Cardiac septum (tissue), 1 donor: ENCODE measurements at regions of chr3 and their contacts with region 1.

Region 1: GRCh38 chr3:159818399-159818798 is 170.2 kb upstream of the IL12A start:
- DNase-seq: no peak

Region 2: GRCh38 chr3:159266779-159267178 is 551.6 kb before region 1 on chr3:
- intact Hi-C with region 1: loop called (anchors 5 kb)
- DNase-seq: no peak

Region 3: GRCh38 chr3:159323848-159324247 is 494.6 kb before region 1 on chr3:
- intact Hi-C with region 1: no loop called
- DNase-seq: no peak

Region 4: DNA sequence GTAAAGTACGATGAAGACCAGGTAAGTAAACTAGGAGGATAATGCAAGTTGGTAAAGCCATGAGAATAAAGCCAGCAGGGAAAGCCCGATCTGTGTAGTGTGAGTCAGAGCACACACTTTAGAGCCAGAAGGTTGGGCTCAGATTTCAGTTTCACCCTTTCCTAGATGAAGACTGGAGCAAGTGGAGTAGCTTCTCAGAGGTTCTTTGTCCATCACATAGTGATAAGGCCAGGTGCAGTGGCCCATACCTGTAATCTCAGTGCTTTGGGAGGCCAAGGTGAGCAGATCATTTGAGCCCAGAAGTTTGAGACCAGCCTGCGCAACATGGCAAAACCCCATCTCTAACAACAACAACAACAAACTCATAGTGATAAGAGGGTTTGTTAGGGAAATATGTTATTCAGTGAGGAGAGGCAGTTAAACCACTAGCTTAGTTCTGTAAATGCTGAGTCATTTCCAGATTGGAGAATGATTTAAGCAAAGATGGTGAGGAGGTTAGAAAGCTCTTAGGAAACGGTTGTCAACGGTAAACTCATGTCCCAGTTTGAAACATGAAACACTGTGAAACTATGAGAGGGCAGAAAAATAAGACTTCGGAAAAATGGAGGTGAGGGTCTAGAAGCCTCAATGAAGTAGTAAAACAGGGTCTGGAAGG is 209.3 kb after region 1 on chr3:
- intact Hi-C with region 1: no loop called
- DNase-seq: no peak